ENCODE measurements at regions of chr19 and their contacts with region 1.

Region 1: GRCh38 chr19:33373701-33374421 is at the start of gene CEBPG:
- H3K4me3 ChIP-seq: peak within 1 kb of the TSS; percentile 82
- H3K27ac ChIP-seq: peak within 1 kb of the TSS; percentile 100
- H3K4me1 ChIP-seq: peaks cover 47% of the 10 kb centered on the region
- CTCF ChIP-seq: peak; percentile 80

Region 2: DNA sequence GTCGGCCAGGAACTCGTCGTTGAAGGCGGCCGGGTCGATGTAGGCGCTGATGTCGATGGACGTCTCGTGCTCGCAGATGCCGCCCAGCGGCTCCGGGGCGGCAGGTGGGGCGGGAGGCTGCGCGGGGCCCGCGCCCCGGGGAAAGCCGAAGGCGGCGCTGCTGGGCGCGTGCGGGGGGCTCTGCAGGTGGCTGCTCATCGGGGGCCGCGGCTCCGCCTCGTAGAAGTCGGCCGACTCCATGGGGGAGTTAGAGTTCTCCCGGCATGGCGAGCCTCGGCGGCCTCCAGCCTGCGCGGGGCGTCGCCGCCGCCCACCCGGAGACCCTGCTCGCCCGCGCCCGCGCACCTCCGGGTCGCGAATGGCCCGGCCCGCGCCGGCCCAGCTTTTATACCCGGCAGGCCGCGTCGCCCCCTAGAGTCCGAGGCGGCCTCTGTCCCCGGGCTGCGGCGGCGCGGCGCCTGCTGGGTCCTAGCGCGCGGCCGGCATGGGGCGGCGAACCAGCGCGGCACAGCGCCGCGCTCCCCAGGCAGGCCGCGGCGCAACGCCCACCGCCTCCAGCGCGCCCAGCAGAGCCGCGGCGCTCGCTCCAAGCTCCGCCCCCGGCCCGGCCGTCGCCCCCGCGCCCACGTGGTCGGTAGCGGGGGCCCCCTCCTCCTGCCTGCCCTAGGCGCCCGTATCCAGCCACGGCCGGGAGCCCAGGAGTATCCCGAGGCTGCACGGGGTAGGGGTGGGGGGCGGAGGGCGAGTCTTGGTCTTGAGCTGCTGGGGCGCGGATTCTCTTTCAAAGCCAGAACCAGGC is 71.5 kb before region 1 on chr19 and contains the start of gene CEBPA:
- CTCF ChIA-PET with region 1: interaction called, 10 read pairs
- POLR2A ChIA-PET with region 1: interaction called, 49 read pairs
- H3K4me3 ChIP-seq: peak within 1 kb of the TSS; percentile 48
- H3K27ac ChIP-seq: peak within 1 kb of the TSS; percentile 98
- H3K4me1 ChIP-seq: peaks cover 68% of the 10 kb centered on the region
- CTCF ChIP-seq: peak; percentile 63; the same call in 1 of the 2 replicates

Region 3: DNA sequence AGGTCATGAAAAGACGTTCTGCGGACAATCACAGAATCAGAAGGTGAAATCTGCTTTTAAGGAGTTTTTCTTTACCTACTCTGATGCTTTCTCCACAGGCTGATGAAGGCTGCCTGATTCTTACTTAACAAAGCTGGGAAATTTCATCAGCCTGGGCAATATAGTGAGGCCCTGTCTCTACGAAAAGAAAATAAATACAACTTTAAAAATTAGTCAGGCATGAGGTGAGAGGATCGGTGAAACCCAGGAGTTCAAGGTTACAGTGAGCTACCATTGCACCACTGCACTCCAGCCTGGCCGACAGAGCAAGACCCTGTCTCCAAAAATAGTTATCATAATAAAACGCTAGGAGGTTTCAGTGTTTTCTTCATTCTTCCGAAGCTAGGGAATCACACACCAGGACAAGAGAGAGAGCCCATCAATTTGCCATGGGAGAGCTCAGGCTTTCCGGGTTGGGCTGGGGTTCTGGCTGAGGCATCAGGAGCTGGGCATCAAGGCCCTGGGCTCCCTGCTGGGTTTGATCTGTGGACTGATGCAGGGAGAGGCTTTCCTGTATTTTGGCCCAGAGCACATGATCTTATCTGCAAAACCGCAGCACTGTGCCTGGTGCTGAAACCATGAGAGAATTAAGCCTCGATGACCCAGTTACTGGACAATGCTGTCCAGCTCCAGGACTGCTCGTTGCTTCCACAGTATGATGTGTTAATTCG is 25.4 kb before region 1 on chr19:
- CTCF ChIA-PET with region 1: interaction called, 5 read pairs
- POLR2A ChIA-PET with region 1: interaction called, 12 read pairs
- H3K4me3 ChIP-seq: no peak overlapping the region
- H3K27ac ChIP-seq: peak overlapping the region; percentile 40
- H3K4me1 ChIP-seq: peaks cover 21% of the 10 kb centered on the region
- CTCF ChIP-seq: no peak

Region 4: DNA sequence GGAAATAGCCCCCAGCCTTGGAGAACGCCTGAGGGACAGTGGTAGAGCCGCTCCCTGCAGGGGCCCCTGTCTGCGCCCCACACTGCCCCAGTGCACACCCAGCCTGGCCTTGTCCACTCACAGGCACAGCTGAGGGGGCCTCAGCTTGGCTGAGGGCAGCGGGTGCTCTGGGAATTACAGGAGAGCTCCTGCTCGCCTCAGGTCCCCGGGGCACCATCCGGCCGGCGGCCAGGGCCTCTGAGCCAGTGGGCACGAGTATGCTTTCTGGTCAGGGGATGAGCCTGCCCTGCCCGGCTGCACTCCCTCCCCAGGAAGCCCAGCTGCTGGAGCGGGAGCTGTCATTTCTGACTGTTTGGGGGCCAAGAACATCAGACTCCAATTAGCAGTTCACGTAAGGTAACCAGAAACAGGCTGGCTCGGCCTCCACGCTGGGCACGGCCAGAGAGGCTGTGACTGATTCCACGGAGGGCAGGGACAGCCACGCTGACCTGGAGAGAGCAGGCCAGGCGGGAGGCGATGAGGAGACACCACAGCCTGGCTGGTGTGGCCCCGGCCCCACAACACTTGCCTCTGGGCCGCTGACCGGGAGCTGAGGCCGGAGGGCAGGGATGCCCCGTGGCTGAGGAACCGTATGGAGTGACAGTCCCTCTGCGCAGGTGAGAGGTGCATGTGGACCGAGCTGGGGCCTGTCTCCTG is 15.0 kb after region 1 on chr19:
- CTCF ChIA-PET with region 1: interaction called, 21 read pairs
- POLR2A ChIA-PET with region 1: interaction called, 44 read pairs
- H3K4me3 ChIP-seq: no peak overlapping the region
- H3K27ac ChIP-seq: no peak overlapping the region
- H3K4me1 ChIP-seq: peaks cover 24% of the 10 kb centered on the region
- CTCF ChIP-seq: no peak

Region 5: GRCh38 chr19:33397536-33398360 is 23.9 kb after region 1 on chr19:
- CTCF ChIA-PET with region 1: interaction called, 8 read pairs
- POLR2A ChIA-PET with region 1: interaction called, 17 read pairs
- H3K4me3 ChIP-seq: no peak overlapping the region
- H3K27ac ChIP-seq: no peak overlapping the region
- H3K4me1 ChIP-seq: no peaks in the 10 kb centered on the region
- CTCF ChIP-seq: peak; percentile 86

Region 6: GRCh38 chr19:33406521-33407139 is 32.8 kb after region 1 on chr19:
- CTCF ChIA-PET with region 1: interaction called, 23 read pairs
- POLR2A ChIA-PET with region 1: interaction called, 7 read pairs
- H3K4me3 ChIP-seq: no peak overlapping the region
- H3K27ac ChIP-seq: no peak overlapping the region
- H3K4me1 ChIP-seq: no peaks in the 10 kb centered on the region
- CTCF ChIP-seq: peak; percentile 99

Region 7: DNA sequence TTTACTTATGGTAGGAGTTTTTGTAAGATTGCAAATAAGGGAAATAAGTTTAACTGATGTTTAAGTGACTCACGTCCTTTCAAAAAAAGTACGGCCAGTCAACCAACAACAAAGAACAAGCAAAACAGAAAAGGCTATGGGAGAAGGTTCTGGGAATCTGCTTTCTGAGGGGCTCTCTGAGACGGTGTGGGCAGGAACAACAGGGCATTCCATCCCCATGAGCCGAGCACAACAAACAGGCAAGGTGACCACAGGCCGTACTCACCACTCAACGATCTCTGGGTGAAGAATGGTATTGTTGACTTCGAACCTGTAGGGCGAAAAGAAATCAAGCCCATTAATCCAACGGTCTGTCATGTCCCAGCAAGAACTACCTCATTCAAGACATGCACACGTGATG is 103.9 kb after region 1 on chr19:
- CTCF ChIA-PET with region 1: no interaction called
- POLR2A ChIA-PET with region 1: no interaction called
- H3K4me3 ChIP-seq: no peak overlapping the region
- H3K27ac ChIP-seq: no peak overlapping the region
- H3K4me1 ChIP-seq: peaks cover 7% of the 10 kb centered on the region; the same call in 1 of the 2 replicates
- CTCF ChIP-seq: no peak

Measured in HEK293 (cell line).